H1 (cell line): ENCODE measurements at regions of chr4 and their contacts with region 1.

Region 1: DNA sequence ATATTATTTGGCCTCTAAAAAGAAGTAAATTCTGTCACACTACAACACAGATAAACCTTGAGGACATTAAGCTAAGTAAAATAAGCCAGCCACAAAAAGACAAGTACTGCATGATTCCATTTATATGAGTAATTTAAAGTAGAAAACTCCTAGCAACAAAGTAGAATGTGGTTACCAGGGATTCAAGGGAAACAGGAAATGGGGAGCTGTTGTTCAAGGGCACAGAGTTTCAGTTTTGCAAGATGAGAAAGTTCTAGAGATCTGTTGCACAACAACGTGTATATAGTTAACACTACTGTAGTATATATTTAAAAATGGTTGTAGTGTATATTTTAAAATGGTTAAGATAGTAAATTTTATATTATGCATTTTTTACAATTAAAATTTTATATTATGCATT is 25.4 kb downstream of the SEC31A start:
- DNase-seq: no peak
- H3K4me3 ChIP-seq: no peak overlapping the region
- H3K27ac ChIP-seq: no peak overlapping the region
- H3K4me1 ChIP-seq: no peaks in the 10 kb centered on the region
- H3K27me3 ChIP-seq: no peaks in the 10 kb centered on the region
- CTCF ChIP-seq: no peak
- EP300 ChIP-seq: no peak
- POLR2A ChIP-seq: no peak
- RAD21 ChIP-seq: no peak

Region 2: DNA sequence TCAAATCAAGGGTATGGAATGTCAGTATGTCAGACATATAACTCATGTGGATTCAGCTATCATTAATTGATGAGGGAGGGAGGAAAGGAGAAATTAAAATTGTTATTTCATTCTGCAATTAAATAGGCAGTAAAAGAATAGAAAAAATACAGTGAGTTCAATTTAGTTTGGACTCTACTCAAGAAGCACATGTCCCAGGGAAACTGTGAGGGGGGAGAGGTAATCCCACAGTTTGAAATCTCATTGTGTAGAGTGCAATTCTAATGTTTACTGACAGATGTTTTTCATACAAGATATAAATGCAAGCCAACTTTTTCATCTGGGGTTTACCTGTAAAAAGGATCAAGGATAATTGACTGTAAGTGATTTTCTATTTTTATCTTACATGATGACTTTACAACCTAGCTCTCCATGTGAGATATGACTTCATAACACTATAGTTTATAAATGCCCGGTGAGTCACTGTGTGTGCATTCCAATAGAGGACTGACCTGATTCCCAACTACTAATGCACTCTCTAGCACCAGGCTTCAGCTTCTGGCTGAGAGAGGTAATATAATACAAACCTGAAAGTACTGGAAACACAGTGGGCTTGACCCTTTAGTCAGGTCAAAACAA is 31.8 kb before region 1 on chr4:
- CTCF ChIA-PET with region 1: no interaction called
- POLR2A ChIA-PET with region 1: no interaction called
- DNase-seq: no peak
- H3K4me3 ChIP-seq: no peak overlapping the region
- H3K27ac ChIP-seq: no peak overlapping the region
- H3K4me1 ChIP-seq: no peaks in the 10 kb centered on the region
- H3K27me3 ChIP-seq: peaks cover 0 to 2% (median 0%) of the 10 kb centered on the region in 4 experiments; a peak in 1 of 7 replicates
- CTCF ChIP-seq: no peak
- EP300 ChIP-seq: no peak
- POLR2A ChIP-seq: no peak
- RAD21 ChIP-seq: no peak

Region 3: GRCh38 chr4:82851885-82852750 is 13.5 kb before region 1 on chr4:
- CTCF ChIA-PET with region 1: interaction called, 14 read pairs
- POLR2A ChIA-PET with region 1: interaction called, 3 read pairs
- DNase-seq: no peak
- H3K4me3 ChIP-seq: no peak overlapping the region
- H3K27ac ChIP-seq: no peak overlapping the region
- H3K4me1 ChIP-seq: no peaks in the 10 kb centered on the region
- H3K27me3 ChIP-seq: no peaks in the 10 kb centered on the region
- CTCF ChIP-seq: peak in 1 of 3 experiments; percentile 52; a peak in 1 of 4 replicates
- EP300 ChIP-seq: no peak
- POLR2A ChIP-seq: no peak
- RAD21 ChIP-seq: peak; percentile 46 to 53